Activated naive CD8-positive, alpha-beta T cell treated with anti-CD3 and anti-CD28 coated beads, Interleukin-2, amount 10 ng/mL, durations not matched to agents 7 days and 5 days (primary cell): ENCODE measurements at regions of chr6 and their contacts with region 1.

Region 1: DNA sequence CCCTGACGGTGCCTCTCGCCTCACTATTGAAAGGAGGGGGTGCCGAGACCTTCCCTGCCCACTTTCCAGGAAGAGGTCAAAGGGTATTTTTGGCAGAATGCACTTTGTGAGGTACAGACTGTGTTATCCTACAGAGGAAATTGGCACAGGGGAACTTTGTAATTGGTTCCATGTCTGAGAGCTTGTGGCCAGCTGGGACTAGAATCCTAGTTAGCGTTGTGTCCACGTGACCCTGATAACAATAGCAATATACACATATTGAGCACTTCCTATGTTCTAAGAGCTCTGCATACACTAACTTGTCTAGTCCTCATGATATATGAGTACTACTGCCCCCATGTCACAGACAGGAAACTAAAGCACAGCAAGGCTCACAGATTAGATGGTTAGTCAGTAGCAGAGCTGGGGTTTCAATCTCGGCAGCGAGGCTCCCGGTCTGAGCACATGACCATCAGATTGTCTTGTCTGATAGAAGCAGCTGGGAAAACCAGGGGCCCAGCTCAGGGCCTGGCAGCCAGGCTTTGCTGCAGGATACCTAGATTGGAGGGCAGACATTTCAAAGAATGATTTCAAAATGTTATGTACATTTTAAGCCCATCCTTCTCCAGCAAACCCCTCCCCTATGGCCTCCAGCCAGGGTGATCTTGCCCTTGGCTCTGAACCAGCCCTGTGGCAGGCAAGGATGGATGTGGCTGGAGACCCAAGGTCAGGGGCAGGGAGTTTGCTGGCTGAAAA is 1.4 kb downstream of the MAPK13 start:
- DNase-seq: peak; percentile 54
- ATAC-seq: peak; percentile 81
- H3K4me3 Mint-ChIP-seq: peak overlapping the region; percentile 86
- H3K27ac Mint-ChIP-seq: peak overlapping the region; percentile 93
- H3K4me1 Mint-ChIP-seq: peaks cover 49% of the 10 kb centered on the region
- H3K27me3 Mint-ChIP-seq: no peaks in the 10 kb centered on the region

Region 2: GRCh38 chr6:36027501-36028087 is 104.1 kb before region 1 on chr6 and contains the start of gene MAPK14:
- POLR2A ChIA-PET with region 1: interaction called, 47 read pairs
- DNase-seq: peak; percentile 96
- ATAC-seq: peak; percentile 89
- H3K4me3 Mint-ChIP-seq: peak within 1 kb of the TSS; percentile 94
- H3K27ac Mint-ChIP-seq: peak within 1 kb of the TSS; percentile 94
- H3K4me1 Mint-ChIP-seq: peaks cover 30% of the 10 kb centered on the region
- H3K27me3 Mint-ChIP-seq: peaks cover 24% of the 10 kb centered on the region
- total RNA-seq, gene MAPK14: 57.3 to 62.2 TPM

Region 3: GRCh38 chr6:36109092-36109491 is 22.6 kb before region 1 on chr6:
- POLR2A ChIA-PET with region 1: interaction called, 11 read pairs
- DNase-seq: no peak
- ATAC-seq: peak; percentile 95
- H3K4me3 Mint-ChIP-seq: peak overlapping the region; percentile 50
- H3K27ac Mint-ChIP-seq: peak overlapping the region; percentile 77
- H3K4me1 Mint-ChIP-seq: peaks cover 33% of the 10 kb centered on the region
- H3K27me3 Mint-ChIP-seq: no peaks in the 10 kb centered on the region

Region 4: GRCh38 chr6:36196880-36197548 is 65.3 kb after region 1 on chr6:
- POLR2A ChIA-PET with region 1: interaction called, 19 read pairs
- DNase-seq: peak; percentile 100
- ATAC-seq: peak; percentile 96
- H3K4me3 Mint-ChIP-seq: peak overlapping the region; percentile 89
- H3K27ac Mint-ChIP-seq: peak overlapping the region; percentile 90
- H3K4me1 Mint-ChIP-seq: peaks cover 23% of the 10 kb centered on the region
- H3K27me3 Mint-ChIP-seq: no peaks in the 10 kb centered on the region